ENCODE measurements at regions of chr1 and their contacts with region 1.

Region 1: GRCh38 chr1:19240673-19241538 is 10.4 kb downstream of the EMC1 start:
- DNase-seq: peak; percentile 52
- H3K4me3 Mint-ChIP-seq: no peak overlapping the region
- H3K27ac Mint-ChIP-seq: no peak overlapping the region
- H3K4me1 Mint-ChIP-seq: no peaks in the 10 kb centered on the region
- H3K27me3 Mint-ChIP-seq: no peaks in the 10 kb centered on the region

Region 2: GRCh38 chr1:18725231-18725895 is 515.5 kb before region 1 on chr1:
- intact Hi-C with region 1: no loop called
- DNase-seq: no peak
- H3K4me3 Mint-ChIP-seq: no peak overlapping the region
- H3K27ac Mint-ChIP-seq: no peak overlapping the region
- H3K4me1 Mint-ChIP-seq: no peaks in the 10 kb centered on the region
- H3K27me3 Mint-ChIP-seq: peaks cover 44% of the 10 kb centered on the region

Region 3: DNA sequence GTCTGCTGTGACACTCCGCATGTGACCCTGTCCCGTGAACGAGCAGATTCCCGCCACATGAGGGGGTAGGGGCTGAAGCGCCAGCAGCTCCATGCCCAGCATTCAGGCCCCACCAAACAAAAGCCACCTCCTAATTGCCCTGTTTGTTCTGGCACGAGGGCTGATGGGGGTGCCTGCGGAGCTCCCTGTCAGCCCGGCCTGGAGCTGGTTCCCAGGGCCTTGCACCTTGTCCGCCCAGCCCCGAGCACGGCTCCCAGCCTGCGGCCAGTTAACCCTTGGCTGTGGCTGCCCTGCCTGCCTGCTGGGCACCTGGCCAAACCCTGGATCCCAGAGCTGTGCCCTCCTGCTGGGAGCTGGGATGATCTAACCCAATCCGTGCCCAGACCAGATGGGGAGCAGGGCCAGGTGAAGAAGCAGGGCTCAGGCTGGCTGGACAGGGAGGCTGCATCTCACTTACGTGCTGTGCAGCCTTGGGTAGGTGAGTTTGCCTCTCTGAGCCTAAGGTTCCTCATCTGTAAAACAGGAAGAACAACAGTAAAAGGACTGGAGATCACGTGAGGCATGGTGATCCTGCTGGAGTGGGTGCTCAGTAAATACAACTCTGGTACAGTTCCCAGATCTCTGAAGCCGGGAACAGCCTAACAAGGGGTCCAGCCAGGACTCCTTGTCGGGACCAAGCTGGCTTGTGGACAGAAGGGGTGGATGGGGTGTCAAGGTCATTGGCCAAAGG is 173.6 kb before region 1 on chr1:
- intact Hi-C with region 1: no loop called
- DNase-seq: no peak
- H3K4me3 Mint-ChIP-seq: no peak overlapping the region
- H3K27ac Mint-ChIP-seq: no peak overlapping the region
- H3K4me1 Mint-ChIP-seq: no peaks in the 10 kb centered on the region
- H3K27me3 Mint-ChIP-seq: no peaks in the 10 kb centered on the region

Region 4: DNA sequence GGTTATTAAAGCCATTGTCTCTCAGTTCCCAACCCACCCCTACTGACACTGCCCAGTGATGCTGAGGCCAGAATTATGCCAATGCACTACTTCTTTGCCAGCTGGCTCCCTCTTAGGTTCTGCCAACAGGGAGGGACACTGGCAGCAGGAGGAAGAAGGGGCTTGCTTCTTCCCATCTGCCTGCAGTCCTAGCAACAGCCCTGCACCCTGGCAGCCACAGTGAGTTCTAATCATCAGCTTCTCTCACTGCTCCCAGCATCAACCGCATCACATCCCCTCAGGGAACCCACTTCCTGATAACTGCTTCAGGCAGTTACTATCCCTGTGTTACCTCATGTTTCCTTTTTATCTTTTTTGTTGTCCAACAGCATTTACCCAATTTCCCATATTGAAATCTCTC is 117.1 kb before region 1 on chr1:
- intact Hi-C with region 1: loop called (anchors 10 kb)
- DNase-seq: peak; percentile 20
- H3K4me3 Mint-ChIP-seq: peak overlapping the region; percentile 20
- H3K27ac Mint-ChIP-seq: peak overlapping the region; percentile 58
- H3K4me1 Mint-ChIP-seq: peaks cover 29% of the 10 kb centered on the region
- H3K27me3 Mint-ChIP-seq: no peaks in the 10 kb centered on the region

Region 5: DNA sequence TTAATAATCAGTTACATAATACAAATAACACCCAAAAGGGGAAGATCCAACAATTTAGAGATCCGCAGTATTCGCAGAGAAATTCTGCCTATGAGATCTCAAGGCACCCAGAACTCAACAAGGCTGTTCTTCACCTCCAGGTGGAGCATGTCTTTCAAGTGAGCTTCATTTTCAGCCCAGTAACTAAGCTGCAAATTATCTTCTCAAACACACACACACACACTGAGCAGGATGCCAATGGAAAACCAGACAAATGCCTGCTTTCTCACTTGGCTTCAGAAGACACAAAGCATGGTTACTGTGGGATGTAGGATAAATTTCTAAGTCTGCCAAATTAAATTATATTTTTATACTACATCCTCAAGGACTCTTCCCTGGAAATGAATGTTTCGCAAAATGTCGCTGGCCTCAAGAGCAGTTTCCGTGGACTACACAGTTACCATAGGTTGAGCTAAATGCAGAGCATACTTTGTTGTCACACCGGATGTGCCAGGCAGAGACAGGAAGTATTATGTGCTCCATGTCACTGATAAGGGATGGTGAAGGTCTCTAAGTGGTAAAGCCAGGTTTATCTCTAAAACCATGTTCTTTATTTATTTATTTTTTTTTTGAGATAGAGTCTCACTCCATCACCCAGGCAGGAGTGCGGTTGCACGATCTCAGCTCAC is 61.2 kb before region 1 on chr1:
- intact Hi-C with region 1: loop called (anchors 5 kb)
- DNase-seq: peak; percentile 31
- H3K4me3 Mint-ChIP-seq: no peak overlapping the region
- H3K27ac Mint-ChIP-seq: peak overlapping the region; percentile 81
- H3K4me1 Mint-ChIP-seq: peaks cover 25% of the 10 kb centered on the region
- H3K27me3 Mint-ChIP-seq: no peaks in the 10 kb centered on the region

Measured in activated T-helper 2 cell treated with anti-CD3 and anti-CD28 coated beads, Interferon-gamma antibody, Interleukin-2, Interleukin-4, amounts not matched to agents 10 μg/mL and 5 μg/mL and 100 μg/mL, durations not matched to agents 14 hours and 24 hours and 36 hours (primary cell).